CD14-positive monocyte (primary cell): ENCODE measurements at regions of chr4 and their contacts with region 1.

Region 1: GRCh38 chr4:3047464-3048286 is 26.7 kb downstream of the HTT-AS start:
- DNase-seq: peak; percentile 68 to 81 (median 78)
- H3K4me3 ChIP-seq: peak overlapping the region; percentile 6 to 61 (median 27)
- H3K4me3 Mint-ChIP-seq: peak overlapping the region; percentile 60 to 78
- H3K27ac ChIP-seq: peak overlapping the region in 1 of 2 donors; percentile 71
- H3K27ac Mint-ChIP-seq: peak overlapping the region; percentile 70 to 95 (median 86)
- H3K4me1 ChIP-seq: peaks cover 22 to 44% of the 10 kb centered on the region in 2 donors
- H3K4me1 Mint-ChIP-seq: peaks cover 35% of the 10 kb centered on the region
- H3K27me3 ChIP-seq: no peaks in the 10 kb centered on the region
- H3K27me3 Mint-ChIP-seq: peaks cover 0 to 5% (median 2%) of the 10 kb centered on the region in 3 donors
- CTCF ChIP-seq: peak; percentile 84

Region 2: GRCh38 chr4:2008875-2009703 is 1038.6 kb before region 1 on chr4 and contains the start of gene NELFA:
- intact Hi-C with region 1: no loop called
- DNase-seq: peak; percentile 89 to 93 (median 91)
- H3K4me3 ChIP-seq: peak within 1 kb of the TSS; percentile 63 to 95 (median 93)
- H3K4me3 Mint-ChIP-seq: peak within 1 kb of the TSS; percentile 86 to 90
- H3K27ac ChIP-seq: peak within 1 kb of the TSS; percentile 89 to 98
- H3K27ac Mint-ChIP-seq: peak within 1 kb of the TSS; percentile 89 to 94 (median 93)
- H3K4me1 ChIP-seq: peaks cover 38 to 44% of the 10 kb centered on the region in 2 donors
- H3K4me1 Mint-ChIP-seq: peaks cover 41% of the 10 kb centered on the region
- H3K27me3 ChIP-seq: peaks cover 0 to under 1% of the 10 kb centered on the region in 2 donors
- H3K27me3 Mint-ChIP-seq: peaks cover 5 to 12% (median 6%) of the 10 kb centered on the region in 3 donors
- CTCF ChIP-seq: no peak
- polyA plus RNA-seq, gene NELFA: 10.0 to 22.1 (median 10.5) TPM

Region 3: DNA sequence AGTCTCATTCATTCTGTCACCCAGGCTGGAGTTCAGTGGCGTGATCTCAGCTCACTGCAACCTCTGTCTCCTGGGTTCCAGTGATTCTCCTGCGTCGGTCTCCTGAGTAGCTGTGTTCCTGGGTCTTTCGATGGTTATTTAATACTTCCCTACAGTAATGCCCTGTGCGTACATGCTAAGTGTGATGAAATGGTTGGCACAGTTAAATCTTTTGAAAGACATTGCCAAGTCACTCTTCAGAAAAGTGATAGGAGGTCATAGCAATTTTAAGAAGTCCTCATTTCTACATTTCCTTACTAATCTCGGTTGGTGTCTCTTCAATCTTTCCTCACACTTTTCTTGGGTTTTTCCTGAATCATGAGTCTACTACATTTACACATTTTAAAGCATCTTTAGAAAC is 12.3 kb after region 1 on chr4:
- intact Hi-C with region 1: loop called in 1 of 2 experiments (anchors 2 kb)
- DNase-seq: peak; percentile 69 to 86 (median 81)
- H3K4me3 ChIP-seq: no peak overlapping the region
- H3K4me3 Mint-ChIP-seq: peak overlapping the region; percentile 47 to 49
- H3K27ac ChIP-seq: peak overlapping the region; percentile 59 to 90
- H3K27ac Mint-ChIP-seq: peak overlapping the region; percentile 93 to 99 (median 97)
- H3K4me1 ChIP-seq: peaks cover 54 to 57% of the 10 kb centered on the region in 2 donors
- H3K4me1 Mint-ChIP-seq: peaks cover 49% of the 10 kb centered on the region
- H3K27me3 ChIP-seq: no peaks in the 10 kb centered on the region
- H3K27me3 Mint-ChIP-seq: peaks cover 0 to 10% (median 5%) of the 10 kb centered on the region in 3 donors
- CTCF ChIP-seq: no peak

Region 4: DNA sequence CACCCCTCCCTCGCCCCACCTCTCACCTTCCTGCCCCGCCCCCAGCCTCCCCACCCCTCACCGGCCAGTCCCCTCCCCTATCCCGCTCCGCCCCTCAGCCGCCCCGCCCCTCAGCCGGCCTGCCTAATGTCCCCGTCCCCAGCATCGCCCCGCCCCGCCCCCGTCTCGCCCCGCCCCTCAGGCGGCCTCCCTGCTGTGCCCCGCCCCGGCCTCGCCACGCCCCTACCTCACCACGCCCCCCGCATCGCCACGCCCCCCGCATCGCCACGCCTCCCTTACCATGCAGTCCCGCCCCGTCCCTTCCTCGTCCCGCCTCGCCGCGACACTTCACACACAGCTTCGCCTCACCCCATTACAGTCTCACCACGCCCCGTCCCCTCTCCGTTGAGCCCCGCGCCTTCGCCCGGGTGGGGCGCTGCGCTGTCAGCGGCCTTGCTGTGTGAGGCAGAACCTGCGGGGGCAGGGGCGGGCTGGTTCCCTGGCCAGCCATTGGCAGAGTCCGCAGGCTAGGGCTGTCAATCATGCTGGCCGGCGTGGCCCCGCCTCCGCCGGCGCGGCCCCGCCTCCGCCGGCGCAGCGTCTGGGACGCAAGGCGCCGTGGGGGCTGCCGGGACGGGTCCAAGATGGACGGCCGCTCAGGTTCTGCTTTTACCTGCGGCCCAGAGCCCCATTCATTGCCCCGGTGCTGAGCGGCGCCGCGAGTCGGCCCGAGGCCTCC is 26.6 kb after region 1 on chr4 and contains the starts of genes HTT and HTT-AS:
- intact Hi-C with region 1: loop called in 1 of 2 experiments (anchors 1 kb)
- DNase-seq: peak; percentile 90 to 94 (median 92)
- H3K4me3 ChIP-seq: peak within 1 kb of the TSS; percentile 73 to 95 (median 89)
- H3K4me3 Mint-ChIP-seq: peak within 1 kb of the TSS; percentile 92
- H3K27ac ChIP-seq: peak within 1 kb of the TSS; percentile 92
- H3K27ac Mint-ChIP-seq: peak within 1 kb of the TSS; percentile 89 to 99 (median 96)
- H3K4me1 ChIP-seq: peaks cover 19 to 31% of the 10 kb centered on the region in 2 donors
- H3K4me1 Mint-ChIP-seq: peaks cover 22% of the 10 kb centered on the region
- H3K27me3 ChIP-seq: no peaks in the 10 kb centered on the region
- H3K27me3 Mint-ChIP-seq: peaks cover 0 to 3% (median 0%) of the 10 kb centered on the region in 3 donors
- CTCF ChIP-seq: no peak
- polyA plus RNA-seq, gene HTT: 1.8 to 27.1 (median 3.0) TPM
- polyA plus RNA-seq, gene HTT-AS: not detected